ENCODE measurements at regions of chr1 and their contacts with region 1.

Region 1: DNA sequence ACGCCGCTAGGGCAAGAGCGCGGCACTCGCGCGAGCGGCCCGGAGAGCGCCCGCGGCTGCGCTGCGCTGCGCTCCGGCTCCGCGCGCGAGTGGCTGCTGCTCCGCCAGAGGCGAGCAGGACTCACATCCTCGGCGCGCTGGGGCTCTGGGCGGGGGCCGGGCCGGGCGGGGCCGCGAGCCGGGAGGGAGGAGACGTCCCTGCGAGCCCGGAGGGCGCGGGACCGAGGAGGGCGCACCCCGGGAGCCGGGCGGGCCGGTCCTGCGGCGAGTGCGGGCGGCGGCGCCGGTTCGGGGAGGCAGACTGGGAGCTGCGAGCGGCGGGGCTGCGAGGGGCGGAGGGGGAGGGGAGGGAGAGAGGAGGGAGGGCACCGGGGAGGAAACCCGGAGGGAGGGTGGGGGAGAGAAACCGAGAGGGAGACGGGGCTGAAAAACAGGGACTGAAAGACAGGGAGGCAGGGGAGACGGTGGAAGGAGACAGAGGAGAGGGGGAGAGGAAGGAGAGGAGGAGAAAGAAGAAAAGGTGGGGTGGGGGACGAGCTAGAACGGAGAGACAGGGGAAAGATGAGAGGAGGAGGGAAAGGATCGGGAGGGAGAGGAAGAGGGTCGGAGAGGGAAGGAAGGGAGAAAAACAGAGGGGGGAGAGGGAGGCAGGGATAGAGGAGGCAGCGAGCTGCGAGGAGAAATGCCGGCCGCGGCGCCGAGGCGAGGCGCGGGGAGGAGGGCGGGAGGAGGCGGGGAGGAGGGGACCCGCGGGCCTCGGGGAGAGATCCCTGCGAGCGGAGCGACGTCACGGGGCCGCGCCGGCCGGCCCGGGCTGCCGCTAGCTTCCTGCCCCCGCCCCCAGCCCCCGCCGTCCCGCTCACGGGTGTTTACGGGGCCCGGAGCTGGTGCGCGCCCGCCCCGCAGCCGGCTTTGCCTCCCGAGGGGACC is at the start of gene CAMK2N1:
- DNase-seq: peak; percentile 24
- H3K4me3 Mint-ChIP-seq: peak within 1 kb of the TSS; percentile 86
- H3K27ac Mint-ChIP-seq: peak within 1 kb of the TSS; percentile 65
- H3K4me1 Mint-ChIP-seq: no peaks in the 10 kb centered on the region
- H3K27me3 Mint-ChIP-seq: peaks cover 58% of the 10 kb centered on the region
- total RNA-seq, gene CAMK2N1: 1.8 and 1.9 TPM in 2 replicates

Region 2: DNA sequence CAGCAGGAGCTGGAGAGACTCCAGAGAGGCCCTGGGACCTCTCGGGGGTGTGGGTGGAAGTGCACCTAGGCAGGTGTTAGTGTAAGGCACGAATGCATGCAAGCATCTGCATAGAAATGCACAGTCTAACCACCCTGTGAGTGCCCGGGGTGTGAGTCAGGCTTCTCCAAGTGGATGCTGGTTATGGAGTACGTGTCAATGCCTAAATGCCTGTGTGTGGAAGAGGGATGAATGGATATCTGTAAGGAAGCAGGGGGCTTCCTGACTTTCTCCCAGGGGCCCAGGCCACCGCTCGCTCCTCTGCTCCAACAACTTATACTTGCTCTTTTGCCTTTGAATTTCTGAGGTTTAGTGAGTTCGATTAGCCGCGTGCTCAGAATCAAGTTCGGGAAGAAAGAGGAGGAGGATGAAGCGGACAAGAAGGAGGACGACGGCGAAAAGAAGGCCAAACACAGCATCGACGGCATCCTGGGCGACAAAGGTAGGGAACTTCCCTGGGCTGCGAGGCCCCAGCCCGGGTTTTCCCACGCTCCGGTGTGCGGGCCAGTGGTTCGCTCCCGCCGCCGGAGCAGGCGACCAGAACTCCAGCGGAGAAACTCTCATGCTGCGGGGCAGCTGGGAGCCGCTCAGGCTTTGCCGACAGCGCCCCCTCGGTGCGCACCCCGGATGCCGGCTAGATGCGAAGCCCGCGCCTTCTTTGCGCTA is 1849.7 kb before region 1 on chr1:
- intact Hi-C with region 1: loop called (anchors 10 kb)
- DNase-seq: no peak
- H3K4me3 Mint-ChIP-seq: no peak overlapping the region
- H3K27ac Mint-ChIP-seq: peak overlapping the region; percentile 66
- H3K4me1 Mint-ChIP-seq: peaks cover 11% of the 10 kb centered on the region
- H3K27me3 Mint-ChIP-seq: peaks cover 86% of the 10 kb centered on the region

Region 3: GRCh38 chr1:20462397-20462796 is 23.4 kb before region 1 on chr1:
- intact Hi-C with region 1: no loop called
- DNase-seq: no peak
- H3K4me3 Mint-ChIP-seq: no peak overlapping the region
- H3K27ac Mint-ChIP-seq: no peak overlapping the region
- H3K4me1 Mint-ChIP-seq: no peaks in the 10 kb centered on the region
- H3K27me3 Mint-ChIP-seq: peaks cover 10% of the 10 kb centered on the region

Measured in activated T-helper 1 cell treated with anti-CD3 and anti-CD28 coated beads, Interleukin-12 subunit alpha, Interleukin-12 subunit beta, Interleukin-2, Interleukin-4 antibody, amounts not matched to agents 30 ng/mL and 10 ng/mL and 1 ng/mL, durations not matched to agents 14 hours and 24 hours and 36 hours (primary cell).